ENCODE measurements at regions of chr16 and their contacts with region 1.

Region 1: DNA sequence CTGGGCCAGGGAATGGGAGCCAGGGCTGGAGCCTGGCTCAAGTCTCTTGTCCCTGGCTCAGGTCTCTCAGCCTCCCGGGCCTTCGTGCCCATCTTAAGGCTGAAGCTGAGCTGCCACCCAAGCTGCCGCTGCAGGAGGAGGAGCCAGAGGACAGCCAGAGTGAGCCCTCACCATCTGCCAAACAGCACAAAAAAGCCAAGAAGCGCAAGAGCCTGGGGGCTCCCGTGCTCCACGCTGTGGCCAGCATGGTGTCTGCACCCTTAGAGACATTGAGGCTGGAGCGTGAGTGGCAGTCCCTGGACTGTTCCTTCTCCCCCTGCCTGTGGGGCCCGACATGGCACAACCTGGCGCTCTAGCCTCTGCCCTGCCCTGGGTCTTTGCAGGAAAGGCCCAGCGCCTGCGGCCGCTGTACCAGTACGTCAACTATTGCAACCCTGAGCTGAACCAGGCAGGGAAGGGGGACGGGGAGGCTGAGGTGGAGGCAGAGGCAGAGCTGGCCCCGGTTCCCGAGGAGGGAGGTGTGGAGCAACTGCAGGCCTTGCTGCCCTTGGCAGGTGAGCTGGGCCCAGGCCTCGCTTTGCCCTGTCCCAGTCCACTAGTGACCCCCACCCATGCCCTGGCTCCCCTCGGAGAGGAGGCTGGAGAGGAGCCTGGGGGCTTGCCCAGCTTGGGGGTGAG is 1.3 kb downstream of the C16orf86 start:
- DNase-seq: peak; percentile 85 to 87 (median 86)
- H3K4me3 ChIP-seq: peak overlapping the region in 2 of 3 experiments; percentile 62 to 96
- H3K4me3 Mint-ChIP-seq: peak overlapping the region; percentile 88 to 96
- H3K27ac ChIP-seq: peak overlapping the region; percentile 65 to 83
- H3K27ac Mint-ChIP-seq: peak overlapping the region in 5 of 7 donors; percentile 91 to 94 (median 91)
- H3K4me1 ChIP-seq: peaks cover 34 to 43% of the 10 kb centered on the region in 2 donors
- H3K4me1 Mint-ChIP-seq: peaks cover 35% of the 10 kb centered on the region
- H3K27me3 ChIP-seq: no peaks in the 10 kb centered on the region
- H3K27me3 Mint-ChIP-seq: peaks cover 0 to 2% (median 0%) of the 10 kb centered on the region in 3 donors
- CTCF ChIP-seq: peak; percentile 89

Region 2: GRCh38 chr16:67499106-67499505 is 168.8 kb before region 1 on chr16:
- intact Hi-C with region 1: loop called in 1 of 2 experiments (anchors 10 kb)
- DNase-seq: no peak
- H3K4me3 ChIP-seq: no peak overlapping the region
- H3K4me3 Mint-ChIP-seq: no peak overlapping the region
- H3K27ac ChIP-seq: no peak overlapping the region
- H3K27ac Mint-ChIP-seq: peak overlapping the region in 2 of 7 donors; percentile 41 to 67
- H3K4me1 ChIP-seq: peaks cover 13 to 21% of the 10 kb centered on the region in 2 donors
- H3K4me1 Mint-ChIP-seq: peaks cover 28% of the 10 kb centered on the region
- H3K27me3 ChIP-seq: no peaks in the 10 kb centered on the region
- H3K27me3 Mint-ChIP-seq: peaks cover 0 to 3% (median 2%) of the 10 kb centered on the region in 3 donors
- CTCF ChIP-seq: no peak

Region 3: GRCh38 chr16:67521095-67521804 is 146.7 kb before region 1 on chr16:
- intact Hi-C with region 1: loop called in 1 of 2 experiments (anchors 10 kb)
- DNase-seq: peak; percentile 98
- H3K4me3 ChIP-seq: peak overlapping the region; percentile 47 to 75 (median 49)
- H3K4me3 Mint-ChIP-seq: peak overlapping the region; percentile 82 to 91
- H3K27ac ChIP-seq: peak overlapping the region; percentile 99
- H3K27ac Mint-ChIP-seq: peak overlapping the region; percentile 99 to 100 (median 100)
- H3K4me1 ChIP-seq: peaks cover 40 to 44% of the 10 kb centered on the region in 2 donors
- H3K4me1 Mint-ChIP-seq: peaks cover 45% of the 10 kb centered on the region
- H3K27me3 ChIP-seq: no peaks in the 10 kb centered on the region
- H3K27me3 Mint-ChIP-seq: peaks cover 6 to 16% (median 10%) of the 10 kb centered on the region in 3 donors
- CTCF ChIP-seq: peak; percentile 93

Region 4: GRCh38 chr16:67719048-67719777 is 51.3 kb after region 1 on chr16 and contains the start of gene GFOD2:
- intact Hi-C with region 1: loop called (anchors 5 kb)
- DNase-seq: peak; percentile 94 to 96 (median 94)
- H3K4me3 ChIP-seq: peak within 1 kb of the TSS; percentile 65 to 98 (median 79)
- H3K4me3 Mint-ChIP-seq: peak within 1 kb of the TSS; percentile 93 to 96
- H3K27ac ChIP-seq: peak within 1 kb of the TSS; percentile 77 to 96
- H3K27ac Mint-ChIP-seq: peak within 1 kb of the TSS; percentile 91 to 97 (median 94)
- H3K4me1 ChIP-seq: peaks cover 17 to 29% of the 10 kb centered on the region in 2 donors
- H3K4me1 Mint-ChIP-seq: peaks cover 33% of the 10 kb centered on the region
- H3K27me3 ChIP-seq: no peaks in the 10 kb centered on the region
- H3K27me3 Mint-ChIP-seq: peaks cover 0 to 2% (median 0%) of the 10 kb centered on the region in 3 donors
- CTCF ChIP-seq: no peak
- polyA plus RNA-seq, gene GFOD2: 3.7 to 9.4 (median 3.8) TPM

Region 5: GRCh38 chr16:67806428-67807147 is 138.6 kb after region 1 on chr16 and contains the starts of genes RANBP10 and TSNAXIP1:
- intact Hi-C with region 1: loop called (anchors 2 to 10 kb)
- DNase-seq: peak; percentile 98 to 99 (median 99)
- H3K4me3 ChIP-seq: peak within 1 kb of the TSS; percentile 76 to 97 (median 84)
- H3K4me3 Mint-ChIP-seq: peak within 1 kb of the TSS; percentile 84 to 94
- H3K27ac ChIP-seq: peak within 1 kb of the TSS; percentile 30 to 92
- H3K27ac Mint-ChIP-seq: peak within 1 kb of the TSS; percentile 73 to 96 (median 94)
- H3K4me1 ChIP-seq: peaks cover 22 to 34% of the 10 kb centered on the region in 2 donors
- H3K4me1 Mint-ChIP-seq: peaks cover 28% of the 10 kb centered on the region
- H3K27me3 ChIP-seq: no peaks in the 10 kb centered on the region
- H3K27me3 Mint-ChIP-seq: peaks cover under 1 to 2% (median 2%) of the 10 kb centered on the region in 3 donors
- CTCF ChIP-seq: no peak
- polyA plus RNA-seq, gene RANBP10: 6.4 to 16.7 (median 6.6) TPM
- polyA plus RNA-seq, gene TSNAXIP1: 0.23 TPM in 1 of 3 donors, not detected in the others

Region 6: DNA sequence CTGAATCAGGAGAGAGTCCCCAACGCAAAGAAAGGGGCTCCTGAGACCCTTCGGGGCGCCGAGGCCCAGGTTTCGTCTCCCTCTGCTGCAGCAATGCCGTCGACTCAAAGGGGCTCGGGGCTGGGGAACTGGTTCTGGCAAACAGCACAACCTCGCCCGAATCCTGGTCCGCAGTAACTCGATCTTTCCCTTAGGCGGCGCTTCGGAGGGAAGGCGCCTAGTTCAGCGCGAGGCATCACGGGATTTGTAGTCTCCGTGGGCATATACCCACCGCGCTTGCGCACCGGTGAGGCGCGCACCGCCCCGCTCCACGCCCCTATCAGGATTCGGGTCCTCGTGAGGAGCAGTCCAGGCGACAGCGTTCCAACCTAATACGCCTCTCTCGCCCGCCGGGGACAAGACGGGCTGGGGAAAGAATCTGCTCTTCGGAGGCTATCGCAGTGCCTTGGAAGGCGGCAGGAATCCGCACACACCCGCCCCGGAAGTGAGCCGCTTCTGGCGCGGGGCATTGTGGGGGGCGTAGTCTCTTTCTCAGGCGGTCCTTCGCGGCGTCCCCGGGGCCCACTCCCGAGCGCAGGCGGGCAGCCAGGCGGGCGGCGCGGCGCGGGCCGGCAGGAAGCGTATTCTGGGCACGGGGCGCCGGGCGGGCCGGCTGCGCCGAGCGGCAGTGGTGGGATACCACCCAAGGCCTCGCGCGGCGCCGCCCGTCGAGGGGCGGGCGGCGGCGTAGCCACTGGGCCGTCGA is 174.0 kb after region 1 on chr16 and contains the start of gene THAP11:
- intact Hi-C with region 1: loop called in 1 of 2 experiments (anchors 10 kb)
- DNase-seq: peak; percentile 91 to 94 (median 91)
- H3K4me3 ChIP-seq: peak within 1 kb of the TSS; percentile 71 to 87 (median 85)
- H3K4me3 Mint-ChIP-seq: peak within 1 kb of the TSS; percentile 94 to 96
- H3K27ac ChIP-seq: peak within 1 kb of the TSS; percentile 85 to 91
- H3K27ac Mint-ChIP-seq: peak within 1 kb of the TSS; percentile 89 to 99 (median 96)
- H3K4me1 ChIP-seq: peaks cover 40 to 47% of the 10 kb centered on the region in 2 donors
- H3K4me1 Mint-ChIP-seq: peaks cover 39% of the 10 kb centered on the region
- H3K27me3 ChIP-seq: no peaks in the 10 kb centered on the region
- H3K27me3 Mint-ChIP-seq: peaks cover 1 to 2% (median 1%) of the 10 kb centered on the region in 3 donors
- CTCF ChIP-seq: peak; percentile 83
- polyA plus RNA-seq, gene THAP11: 17.6 to 84.2 (median 52.5) TPM

Region 7: DNA sequence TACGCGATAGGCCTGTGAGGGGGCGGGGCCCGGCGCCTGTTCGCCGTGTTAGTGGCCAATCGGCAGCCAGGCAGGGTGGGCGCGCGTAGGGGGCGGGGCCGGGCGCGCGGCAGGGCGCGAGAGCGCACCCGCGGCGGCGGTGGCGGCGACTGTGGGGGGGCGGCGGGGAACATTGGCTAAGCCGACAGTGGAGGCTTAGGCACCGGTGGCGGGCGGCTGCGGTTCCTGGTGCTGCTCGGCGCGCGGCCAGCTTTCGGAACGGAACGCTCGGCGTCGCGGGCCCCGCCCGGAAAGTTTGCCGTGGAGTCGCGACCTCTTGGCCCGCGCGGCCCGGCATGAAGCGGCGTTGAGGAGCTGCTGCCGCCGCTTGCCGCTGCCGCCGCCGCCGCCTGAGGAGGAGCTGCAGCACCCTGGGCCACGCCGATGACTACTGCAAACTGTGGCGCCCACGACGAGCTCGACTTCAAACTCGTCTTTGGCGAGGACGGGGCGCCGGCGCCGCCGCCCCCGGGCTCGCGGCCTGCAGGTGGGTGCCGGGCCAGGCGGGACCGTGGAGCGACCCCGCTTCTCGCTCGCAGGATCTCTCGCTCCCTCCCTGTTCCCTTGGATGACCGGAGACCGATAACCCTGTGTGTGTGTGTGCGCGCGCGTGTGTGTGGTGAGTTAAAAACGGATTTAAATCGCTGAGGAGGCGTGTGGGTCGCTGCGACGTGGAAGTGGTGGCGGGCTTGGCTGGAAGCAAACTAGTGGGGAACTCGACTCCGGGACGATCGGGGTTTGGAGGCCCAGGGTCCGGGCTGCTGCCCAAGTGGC is 417.5 kb after region 1 on chr16 and contains the start of gene NFATC3:
- intact Hi-C with region 1: loop called (anchors 5 to 10 kb)
- DNase-seq: peak; percentile 95 to 98 (median 97)
- H3K4me3 ChIP-seq: peak within 1 kb of the TSS; percentile 75 to 98 (median 87)
- H3K4me3 Mint-ChIP-seq: peak within 1 kb of the TSS; percentile 90
- H3K27ac ChIP-seq: peak within 1 kb of the TSS; percentile 91 to 92
- H3K27ac Mint-ChIP-seq: peak within 1 kb of the TSS; percentile 86 to 97 (median 93)
- H3K4me1 ChIP-seq: peaks cover 45 to 69% of the 10 kb centered on the region in 2 donors
- H3K4me1 Mint-ChIP-seq: peaks cover 70% of the 10 kb centered on the region
- H3K27me3 ChIP-seq: no peaks in the 10 kb centered on the region
- H3K27me3 Mint-ChIP-seq: peaks cover 0 to 2% (median 0%) of the 10 kb centered on the region in 3 donors
- CTCF ChIP-seq: no peak
- polyA plus RNA-seq, gene NFATC3: 14.3 to 21.8 (median 15.8) TPM